PC-9 (cell line): ENCODE measurements at regions of chr1 and their contacts with region 1.

Region 1: GRCh38 chr1:93629099-93630059 is 52.3 kb downstream of the BCAR3 start:
- DNase-seq: peak; percentile 44 to 74
- H3K4me3 ChIP-seq: no peak overlapping the region
- H3K27ac ChIP-seq: peak overlapping the region; percentile 22
- H3K4me1 ChIP-seq: peaks cover 91% of the 10 kb centered on the region
- H3K27me3 ChIP-seq: no peaks in the 10 kb centered on the region
- CTCF ChIP-seq: peak; percentile 98

Region 2: DNA sequence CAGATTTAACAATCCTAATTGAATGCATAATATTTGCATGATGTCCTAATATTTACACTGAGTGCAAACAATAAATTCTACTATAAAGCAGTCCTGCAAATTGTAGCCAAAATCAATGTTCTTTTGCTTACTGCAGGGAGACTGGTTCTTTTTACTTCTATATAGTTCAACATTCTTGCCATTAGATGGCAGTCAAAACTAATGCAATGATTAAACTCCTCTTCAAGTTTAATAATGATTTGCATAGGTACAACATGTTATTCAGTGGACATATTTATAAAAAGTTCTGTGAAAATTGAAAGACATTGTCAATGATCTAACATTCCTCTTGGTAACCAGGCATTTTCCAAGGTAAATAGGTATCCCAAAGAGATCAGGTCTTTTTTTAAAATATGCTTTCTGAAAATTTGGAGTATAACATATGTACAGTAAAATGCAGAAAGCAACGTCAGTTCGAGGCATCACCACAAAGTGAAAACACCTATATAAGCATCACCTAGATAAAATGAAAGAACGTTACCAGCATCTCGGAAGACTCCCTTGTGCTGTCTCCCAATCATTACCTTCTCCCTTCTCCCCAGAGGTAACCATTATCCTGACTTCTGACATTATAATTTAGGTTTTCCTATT is 191.3 kb before region 1 on chr1:
- CTCF ChIA-PET with region 1: interaction called, 3 read pairs
- POLR2A ChIA-PET with region 1: no interaction called
- intact Hi-C with region 1: loop called (anchors 2 kb)
- DNase-seq: peak in 1 of 2 experiments; percentile 70
- H3K4me3 ChIP-seq: no peak overlapping the region
- H3K27ac ChIP-seq: no peak overlapping the region
- H3K4me1 ChIP-seq: peaks cover 14% of the 10 kb centered on the region
- H3K27me3 ChIP-seq: no peaks in the 10 kb centered on the region
- CTCF ChIP-seq: peak; percentile 96

Region 3: DNA sequence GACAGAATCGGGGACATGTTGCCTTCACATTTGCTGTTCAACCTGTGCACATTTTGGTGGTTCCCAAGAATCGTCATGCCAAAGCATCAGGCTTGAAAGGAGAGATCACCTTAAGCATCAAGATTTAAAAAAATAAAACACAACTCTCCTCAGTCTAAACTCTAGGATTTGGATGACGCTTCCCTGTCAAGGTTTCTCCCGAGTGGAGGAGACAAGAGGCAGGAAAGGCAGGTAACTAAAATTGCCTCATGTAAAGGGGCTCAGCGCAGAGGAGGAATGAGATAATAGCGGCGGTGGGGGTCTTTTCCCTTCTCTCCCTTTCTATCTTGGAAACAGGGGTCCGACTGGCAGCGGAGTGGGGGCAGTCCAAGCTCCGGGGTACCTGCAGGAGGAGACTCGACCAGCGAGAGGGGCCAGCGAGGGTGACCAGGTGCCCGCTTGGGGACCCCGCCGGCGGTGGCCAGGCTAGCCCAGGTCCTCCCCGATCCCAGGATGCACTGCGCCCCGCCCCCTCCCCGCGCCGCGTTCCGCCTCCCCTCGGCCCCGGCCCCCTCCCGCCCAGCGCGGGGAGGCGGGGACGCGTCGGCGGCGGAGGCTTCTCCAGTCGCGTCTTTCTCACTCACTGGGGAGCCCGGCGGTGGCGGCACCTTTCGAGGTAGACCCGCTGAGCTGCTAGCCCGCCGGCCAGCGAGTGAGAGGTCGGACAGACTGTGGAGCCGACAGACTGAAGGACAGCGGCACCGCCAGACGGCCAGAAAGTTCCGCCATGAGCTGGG is 181.7 kb before region 1 on chr1 and contains the start of gene FNBP1L:
- CTCF ChIA-PET with region 1: no interaction called
- POLR2A ChIA-PET with region 1: no interaction called
- intact Hi-C with region 1: loop called (anchors 2 kb)
- DNase-seq: peak; percentile 76 to 86
- H3K4me3 ChIP-seq: peak within 1 kb of the TSS; percentile 90
- H3K27ac ChIP-seq: peak within 1 kb of the TSS; percentile 44
- H3K4me1 ChIP-seq: peaks cover 28% of the 10 kb centered on the region
- H3K27me3 ChIP-seq: no peaks in the 10 kb centered on the region
- CTCF ChIP-seq: no peak
- total RNA-seq, gene FNBP1L: 34.1 and 34.3 TPM in 2 replicates

Region 4: DNA sequence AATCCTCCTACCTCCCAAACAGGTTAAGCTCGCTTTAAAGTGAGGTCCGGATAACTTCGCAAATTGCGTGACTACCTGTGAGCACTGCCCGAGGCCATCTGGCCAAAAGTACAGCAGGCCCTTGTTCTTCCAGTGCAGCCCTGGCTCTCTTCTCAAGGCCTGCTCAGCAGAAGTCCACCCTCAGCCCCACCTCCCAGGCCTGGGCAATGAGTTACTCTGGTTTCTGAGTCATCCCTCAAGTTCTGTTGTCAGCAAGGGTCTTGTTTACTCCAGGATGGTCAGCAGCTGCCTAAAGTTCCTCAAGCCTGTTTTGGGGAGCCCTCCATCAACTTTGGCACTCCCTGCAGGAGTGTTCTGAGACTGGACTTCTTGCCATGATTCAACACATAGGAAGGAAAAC is 49.5 kb before region 1 on chr1:
- CTCF ChIA-PET with region 1: interaction called, 18 read pairs
- POLR2A ChIA-PET with region 1: interaction called, 4 read pairs
- intact Hi-C with region 1: no loop called
- DNase-seq: peak; percentile 93 to 100
- H3K4me3 ChIP-seq: no peak overlapping the region
- H3K27ac ChIP-seq: peak overlapping the region; percentile 83
- H3K4me1 ChIP-seq: peaks cover 68% of the 10 kb centered on the region
- H3K27me3 ChIP-seq: no peaks in the 10 kb centered on the region
- CTCF ChIP-seq: no peak

Region 5: DNA sequence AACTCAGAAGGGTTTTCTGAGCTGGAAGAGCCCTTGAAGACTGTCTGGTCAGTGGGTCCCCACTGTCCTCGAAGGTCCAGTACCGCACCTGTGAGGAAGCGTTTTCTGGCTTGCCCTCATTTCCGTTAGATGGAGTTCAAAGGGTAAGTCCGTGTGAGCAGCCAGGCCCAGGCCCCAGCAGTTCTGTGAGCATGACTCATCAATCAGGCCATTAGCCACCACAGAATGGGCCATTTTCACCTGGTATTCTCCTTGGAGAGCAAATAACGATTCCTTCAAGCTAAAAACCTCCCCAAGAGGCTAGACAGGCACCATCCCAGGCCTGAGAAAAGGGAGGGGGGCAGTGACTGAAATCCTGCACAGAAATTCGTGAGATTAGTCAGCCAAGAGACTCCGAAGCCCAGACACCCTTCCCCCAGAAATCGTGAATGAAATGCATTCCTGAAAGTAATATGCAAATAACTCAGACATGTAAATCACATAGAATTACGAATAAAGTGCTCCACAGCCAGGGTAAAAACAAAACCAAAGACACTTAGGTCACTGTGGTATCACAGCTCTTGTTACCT is 13.7 kb before region 1 on chr1:
- CTCF ChIA-PET with region 1: interaction called, 10 read pairs
- POLR2A ChIA-PET with region 1: no interaction called
- intact Hi-C with region 1: no loop called
- DNase-seq: peak; percentile 33 to 57
- H3K4me3 ChIP-seq: peak overlapping the region; percentile 3; the same call in 1 of the 2 replicates
- H3K27ac ChIP-seq: peak overlapping the region; percentile 81
- H3K4me1 ChIP-seq: peaks cover 77% of the 10 kb centered on the region
- H3K27me3 ChIP-seq: no peaks in the 10 kb centered on the region
- CTCF ChIP-seq: no peak

Region 6: DNA sequence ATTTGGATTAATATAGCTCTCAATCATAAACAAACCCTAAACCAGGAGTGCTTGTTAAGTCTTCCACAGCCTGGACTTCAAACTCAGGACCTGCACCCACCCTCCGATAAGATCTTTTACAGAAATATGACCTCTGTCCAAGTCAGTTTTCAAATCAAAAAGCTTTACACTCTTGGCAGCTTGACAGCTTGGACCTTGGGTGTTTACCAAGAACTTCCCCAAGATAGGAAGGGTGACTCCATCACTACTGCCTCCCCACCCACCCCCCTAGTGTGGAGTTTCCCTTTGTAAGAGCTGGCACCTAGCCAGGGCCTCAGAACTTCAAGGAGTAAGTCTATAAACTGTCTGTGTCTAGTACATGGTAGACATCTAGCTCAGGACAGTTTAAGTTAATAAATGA is 42.7 kb after region 1 on chr1:
- CTCF ChIA-PET with region 1: interaction called, 5 read pairs
- POLR2A ChIA-PET with region 1: no interaction called
- intact Hi-C with region 1: loop called (anchors 2 kb)
- DNase-seq: peak; percentile 70 to 89
- H3K4me3 ChIP-seq: peak overlapping the region; percentile 22; the same call in 1 of the 2 replicates
- H3K27ac ChIP-seq: peak overlapping the region; percentile 62
- H3K4me1 ChIP-seq: peaks cover 100% of the 10 kb centered on the region
- H3K27me3 ChIP-seq: no peaks in the 10 kb centered on the region
- CTCF ChIP-seq: no peak

Region 7: DNA sequence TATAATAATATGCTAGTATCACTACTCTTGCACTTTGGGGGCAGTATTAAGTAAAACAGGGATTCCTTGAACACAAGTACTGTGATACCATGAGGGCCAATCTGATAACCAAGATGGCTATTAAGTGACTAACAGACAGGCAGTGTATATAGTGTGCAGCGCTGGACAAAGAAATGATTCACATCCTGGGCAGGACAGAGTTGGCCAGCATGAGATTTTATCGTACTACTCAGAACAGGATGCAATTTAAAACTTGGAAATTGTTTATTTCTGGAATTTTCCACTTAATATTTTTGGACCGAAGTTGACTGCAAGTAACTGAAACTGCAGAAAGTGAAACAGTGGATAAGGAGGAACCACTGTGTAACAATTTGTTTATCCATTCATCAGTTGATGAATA is 175.0 kb after region 1 on chr1:
- CTCF ChIA-PET with region 1: no interaction called
- POLR2A ChIA-PET with region 1: no interaction called
- intact Hi-C with region 1: no loop called
- DNase-seq: peak; percentile 38 to 90
- H3K4me3 ChIP-seq: peak overlapping the region; percentile 2; the same call in 1 of the 2 replicates
- H3K27ac ChIP-seq: peak overlapping the region; percentile 66
- H3K4me1 ChIP-seq: peaks cover 35% of the 10 kb centered on the region
- H3K27me3 ChIP-seq: no peaks in the 10 kb centered on the region
- CTCF ChIP-seq: no peak

Region 8: DNA sequence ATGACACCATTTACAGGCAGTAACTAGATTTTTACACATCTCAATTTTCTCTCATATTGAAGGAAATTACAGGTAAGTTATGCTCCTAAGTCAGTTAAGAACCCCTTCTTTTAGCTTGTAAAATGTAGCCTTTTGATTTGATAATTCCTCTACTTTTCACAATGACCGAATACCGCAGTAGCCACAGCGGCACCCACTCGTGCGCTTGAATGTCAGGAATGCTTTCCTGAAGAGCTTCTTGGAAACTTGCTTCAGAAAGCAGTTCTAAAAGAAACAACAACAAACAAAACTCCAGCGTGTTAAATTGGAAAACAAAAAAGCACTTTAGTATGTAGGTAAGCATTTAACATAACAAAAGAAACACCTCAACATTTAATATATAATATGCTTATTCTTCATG is 259.5 kb after region 1 on chr1:
- CTCF ChIA-PET with region 1: no interaction called
- POLR2A ChIA-PET with region 1: no interaction called
- intact Hi-C with region 1: no loop called
- DNase-seq: no peak
- H3K4me3 ChIP-seq: no peak overlapping the region
- H3K27ac ChIP-seq: peak overlapping the region; percentile 4; the same call in 1 of the 2 replicates
- H3K4me1 ChIP-seq: no peaks in the 10 kb centered on the region
- H3K27me3 ChIP-seq: no peaks in the 10 kb centered on the region
- CTCF ChIP-seq: no peak

Region 9: DNA sequence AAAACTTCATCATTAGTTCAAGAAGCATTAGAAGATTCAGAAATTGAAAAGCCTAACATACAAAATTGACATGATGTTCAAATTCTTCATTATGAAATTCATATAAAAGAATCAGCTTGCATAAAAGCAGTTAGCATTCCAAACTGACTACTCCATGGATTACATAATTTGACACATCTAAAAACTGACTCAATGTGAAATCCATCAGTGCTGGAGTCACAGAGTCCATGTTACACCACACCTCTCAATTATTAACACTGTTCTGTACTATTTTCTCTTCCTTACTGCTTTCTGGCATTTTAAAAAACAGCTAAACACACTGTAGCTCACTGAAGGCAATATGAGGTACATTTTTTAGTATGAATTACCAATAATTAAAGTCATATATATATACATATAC is 580.0 kb after region 1 on chr1:
- CTCF ChIA-PET with region 1: interaction called, 11 read pairs
- POLR2A ChIA-PET with region 1: no interaction called
- intact Hi-C with region 1: no loop called
- DNase-seq: peak in 1 of 2 experiments; percentile 80
- H3K4me3 ChIP-seq: no peak overlapping the region
- H3K27ac ChIP-seq: peak overlapping the region; percentile 35
- H3K4me1 ChIP-seq: peaks cover 6% of the 10 kb centered on the region
- H3K27me3 ChIP-seq: no peaks in the 10 kb centered on the region
- CTCF ChIP-seq: no peak